Aorta (tissue), 5 donors: ENCODE measurements at regions of chr13 and their contacts with region 1.

Region 1: GRCh38 chr13:113153810-113154748 is 4.4 kb upstream of the PROZ start:
- DNase-seq: peak; percentile 89 to 91
- ATAC-seq: peak; percentile 88
- H3K4me3 ChIP-seq: peak overlapping the region; percentile 21 to 33
- H3K27ac ChIP-seq: no peak overlapping the region
- H3K4me1 ChIP-seq: no peaks in the 10 kb centered on the region
- H3K27me3 ChIP-seq: no peaks in the 10 kb centered on the region

Region 2: GRCh38 chr13:113029487-113030258 is 124.4 kb before region 1 on chr13:
- intact Hi-C with region 1: loop called in 1 of 2 experiments (anchors 10 kb)
- DNase-seq: no peak
- ATAC-seq: no peak
- H3K4me3 ChIP-seq: no peak overlapping the region
- H3K27ac ChIP-seq: no peak overlapping the region
- H3K4me1 ChIP-seq: no peaks in the 10 kb centered on the region
- H3K27me3 ChIP-seq: no peaks in the 10 kb centered on the region

Region 3: GRCh38 chr13:113044391-113045114 is 109.5 kb before region 1 on chr13:
- intact Hi-C with region 1: loop called (anchors 5 to 10 kb)
- DNase-seq: peak in 1 of 2 donors; percentile 48
- ATAC-seq: peak; percentile 24
- H3K4me3 ChIP-seq: no peak overlapping the region
- H3K27ac ChIP-seq: no peak overlapping the region
- H3K4me1 ChIP-seq: no peaks in the 10 kb centered on the region
- H3K27me3 ChIP-seq: no peaks in the 10 kb centered on the region

Region 4: GRCh38 chr13:113208424-113209335 is 54.6 kb after region 1 on chr13 and contains the start of gene PCID2:
- intact Hi-C with region 1: loop called in 1 of 2 experiments (anchors 5 kb)
- DNase-seq: peak; percentile 92 to 95
- ATAC-seq: peak; percentile 97
- H3K4me3 ChIP-seq: peak within 1 kb of the TSS; percentile 64 to 68
- H3K27ac ChIP-seq: peak within 1 kb of the TSS; percentile 90 to 98
- H3K4me1 ChIP-seq: no peaks in the 10 kb centered on the region
- H3K27me3 ChIP-seq: no peaks in the 10 kb centered on the region
- total RNA-seq, gene PCID2: 33.3 to 51.1 TPM